ENCODE measurements at regions of chr11 and their contacts with region 1.

Region 1: GRCh38 chr11:64269380-64270234 is 14.9 kb downstream of the BAD start:
- DNase-seq: peak; percentile 98
- ATAC-seq: peak; percentile 71
- H3K4me3 Mint-ChIP-seq: peak overlapping the region; percentile 89
- H3K27ac Mint-ChIP-seq: peak overlapping the region; percentile 96
- H3K4me1 Mint-ChIP-seq: peaks cover 31% of the 10 kb centered on the region
- H3K27me3 Mint-ChIP-seq: no peaks in the 10 kb centered on the region

Region 2: DNA sequence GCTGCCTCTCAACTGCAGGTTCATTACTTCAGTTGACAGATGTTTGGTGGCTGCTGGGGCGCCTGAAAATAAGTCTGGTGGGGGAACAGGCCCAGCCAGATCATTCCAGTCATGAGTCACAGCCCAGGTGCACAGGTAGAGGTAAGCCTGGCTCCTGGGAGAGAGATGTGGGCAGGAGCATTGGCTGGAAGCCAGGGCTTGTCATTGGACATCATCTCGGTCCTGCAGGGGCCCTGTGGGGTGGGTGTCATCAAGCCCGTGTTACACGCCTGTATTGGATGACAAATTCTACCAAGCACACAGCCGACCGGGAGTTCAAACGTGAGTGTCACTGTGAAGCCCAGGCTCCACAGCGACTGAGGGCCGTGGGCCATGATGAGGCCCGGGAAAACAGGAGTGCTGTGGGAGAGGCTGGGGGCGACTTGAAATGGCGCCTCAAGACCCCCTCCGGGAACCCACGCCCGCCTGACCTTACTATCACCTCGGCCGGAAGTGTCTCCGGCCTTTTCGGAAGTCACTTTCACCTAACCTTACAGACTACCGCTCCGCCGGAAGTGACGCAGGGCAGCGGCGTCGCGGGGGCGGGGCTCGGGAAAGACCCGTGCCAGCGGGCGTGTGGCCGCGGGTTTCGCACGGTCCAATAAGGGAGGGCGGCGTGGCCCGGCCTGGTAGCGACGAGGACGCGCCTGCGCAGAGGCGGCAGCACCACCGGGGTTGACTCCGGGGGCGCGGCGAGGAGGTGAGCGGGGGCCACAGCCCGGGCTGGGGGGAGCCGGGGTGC is 29.0 kb before region 1 on chr11 and contains the start of gene FKBP2:
- CTCF ChIA-PET with region 1: interaction called, 20 read pairs
- DNase-seq: peak; percentile 98
- ATAC-seq: peak; percentile 75
- H3K4me3 Mint-ChIP-seq: peak within 1 kb of the TSS; percentile 83
- H3K27ac Mint-ChIP-seq: peak within 1 kb of the TSS; percentile 95
- H3K4me1 Mint-ChIP-seq: peaks cover 47% of the 10 kb centered on the region
- H3K27me3 Mint-ChIP-seq: no peaks in the 10 kb centered on the region
- total RNA-seq, gene FKBP2: 23.4 to 23.9 TPM

Region 3: DNA sequence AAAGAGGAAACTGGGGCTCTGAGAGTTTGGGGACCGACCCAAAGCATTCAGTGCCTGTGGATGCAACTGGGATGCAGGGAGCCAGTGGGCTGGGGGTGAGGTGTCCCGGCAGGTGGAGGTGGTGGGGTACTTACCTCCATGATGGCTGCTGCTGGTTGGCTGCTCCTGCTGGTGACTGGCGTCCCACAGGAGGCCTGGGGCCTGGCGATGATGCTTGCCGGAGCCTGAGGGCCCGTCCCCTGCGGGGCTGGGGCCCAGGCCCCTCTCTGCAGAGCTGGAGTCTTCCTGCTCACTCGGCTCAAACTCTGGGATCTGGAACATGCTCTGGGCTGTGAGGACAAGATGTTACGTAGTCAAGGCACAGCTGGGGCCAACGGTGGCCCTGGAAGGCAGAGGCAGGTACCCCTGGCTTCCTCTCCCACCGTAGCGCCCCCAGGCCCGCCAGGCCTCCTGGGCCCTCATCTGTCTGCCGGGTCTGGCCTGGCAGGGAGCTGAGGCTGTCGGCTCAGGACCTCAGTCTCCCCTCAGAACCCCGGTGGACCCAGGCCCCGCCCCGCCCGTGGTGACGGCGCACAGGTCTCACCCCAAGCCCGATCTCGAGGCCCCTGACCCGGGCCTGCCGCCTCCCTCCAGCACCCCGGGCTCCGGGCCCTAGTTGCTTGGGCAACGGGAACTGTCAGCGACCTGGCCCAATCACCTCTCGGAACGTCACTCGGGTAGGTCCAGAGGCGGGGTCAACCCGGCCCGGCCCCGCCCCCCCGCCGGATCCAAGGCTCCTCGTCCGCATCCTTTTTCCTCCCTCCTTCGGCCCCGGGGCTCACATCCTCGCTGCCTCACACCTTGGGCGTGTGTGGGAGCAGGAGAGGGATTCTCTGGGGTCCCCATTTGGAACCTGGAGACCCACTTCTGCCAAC is 14.7 kb after region 1 on chr11 and contains the start of gene BAD:
- CTCF ChIA-PET with region 1: interaction called, 13 read pairs
- DNase-seq: peak; percentile 96
- ATAC-seq: peak; percentile 85
- H3K4me3 Mint-ChIP-seq: peak within 1 kb of the TSS; percentile 79
- H3K27ac Mint-ChIP-seq: peak within 1 kb of the TSS; percentile 89
- H3K4me1 Mint-ChIP-seq: peaks cover 18% of the 10 kb centered on the region
- H3K27me3 Mint-ChIP-seq: no peaks in the 10 kb centered on the region
- total RNA-seq, gene BAD: 35.6 to 36.1 TPM

Region 4: GRCh38 chr11:64598797-64599697 is 329.4 kb after region 1 on chr11:
- CTCF ChIA-PET with region 1: no interaction called
- DNase-seq: no peak
- ATAC-seq: no peak
- H3K4me3 Mint-ChIP-seq: no peak overlapping the region
- H3K27ac Mint-ChIP-seq: no peak overlapping the region
- H3K4me1 Mint-ChIP-seq: no peaks in the 10 kb centered on the region
- H3K27me3 Mint-ChIP-seq: no peaks in the 10 kb centered on the region